Activated CD8-positive, alpha-beta T cell treated with anti-CD3 and anti-CD28 coated beads for 36 hours (primary cell): ENCODE measurements at regions of chr12 and their contacts with region 1.

Region 1: GRCh38 chr12:3885277-3886094 is 12.3 kb upstream of the PARP11 start:
- DNase-seq: peak; percentile 56
- ATAC-seq: no peak
- H3K4me3 Mint-ChIP-seq: no peak overlapping the region
- H3K27ac Mint-ChIP-seq: no peak overlapping the region
- H3K4me1 Mint-ChIP-seq: peaks cover 5% of the 10 kb centered on the region
- H3K27me3 Mint-ChIP-seq: no peaks in the 10 kb centered on the region
- CTCF ChIP-seq: peak; percentile 96

Region 2: GRCh38 chr12:3872800-3873636 is 12.5 kb before region 1 on chr12 and contains the start of gene PARP11:
- CTCF ChIA-PET with region 1: interaction called, 21 read pairs
- POLR2A ChIA-PET with region 1: interaction called, 4 read pairs
- intact Hi-C with region 1: no loop called
- DNase-seq: peak; percentile 99
- ATAC-seq: peak; percentile 96
- H3K4me3 Mint-ChIP-seq: peak within 1 kb of the TSS; percentile 93
- H3K27ac Mint-ChIP-seq: peak within 1 kb of the TSS; percentile 95
- H3K4me1 Mint-ChIP-seq: peaks cover 37% of the 10 kb centered on the region
- H3K27me3 Mint-ChIP-seq: no peaks in the 10 kb centered on the region
- CTCF ChIP-seq: no peak
- total RNA-seq, gene PARP11: 19.7 to 22.3 TPM

Region 3: GRCh38 chr12:3933074-3933818 is 47.8 kb after region 1 on chr12:
- CTCF ChIA-PET with region 1: interaction called, 11 read pairs
- POLR2A ChIA-PET with region 1: no interaction called
- intact Hi-C with region 1: no loop called
- DNase-seq: no peak
- ATAC-seq: peak; percentile 51
- H3K4me3 Mint-ChIP-seq: no peak overlapping the region
- H3K27ac Mint-ChIP-seq: peak overlapping the region; percentile 40
- H3K4me1 Mint-ChIP-seq: peaks cover 52% of the 10 kb centered on the region
- H3K27me3 Mint-ChIP-seq: peaks cover 3% of the 10 kb centered on the region
- CTCF ChIP-seq: no peak

Region 4: GRCh38 chr12:3973978-3974644 is 88.6 kb after region 1 on chr12:
- CTCF ChIA-PET with region 1: interaction called, 10 read pairs
- POLR2A ChIA-PET with region 1: interaction called, 3 read pairs
- intact Hi-C with region 1: loop called (anchors 10 kb)
- DNase-seq: peak; percentile 37
- ATAC-seq: peak; percentile 18
- H3K4me3 Mint-ChIP-seq: peak overlapping the region; percentile 52
- H3K27ac Mint-ChIP-seq: peak overlapping the region; percentile 92
- H3K4me1 Mint-ChIP-seq: peaks cover 64% of the 10 kb centered on the region
- H3K27me3 Mint-ChIP-seq: no peaks in the 10 kb centered on the region
- CTCF ChIP-seq: no peak

Region 5: GRCh38 chr12:4030929-4031702 is 145.6 kb after region 1 on chr12:
- CTCF ChIA-PET with region 1: interaction called, 70 read pairs
- POLR2A ChIA-PET with region 1: interaction called, 5 read pairs
- intact Hi-C with region 1: loop called (anchors 10 kb)
- DNase-seq: peak; percentile 77
- ATAC-seq: peak; percentile 91
- H3K4me3 Mint-ChIP-seq: peak overlapping the region; percentile 59
- H3K27ac Mint-ChIP-seq: peak overlapping the region; percentile 22
- H3K4me1 Mint-ChIP-seq: peaks cover 37% of the 10 kb centered on the region
- H3K27me3 Mint-ChIP-seq: no peaks in the 10 kb centered on the region
- CTCF ChIP-seq: no peak

Region 6: GRCh38 chr12:4148418-4149056 is 263.1 kb after region 1 on chr12:
- CTCF ChIA-PET with region 1: interaction called, 10 read pairs
- POLR2A ChIA-PET with region 1: no interaction called
- intact Hi-C with region 1: no loop called
- DNase-seq: peak; percentile 80
- ATAC-seq: peak; percentile 7
- H3K4me3 Mint-ChIP-seq: no peak overlapping the region
- H3K27ac Mint-ChIP-seq: peak overlapping the region; percentile 90
- H3K4me1 Mint-ChIP-seq: peaks cover 87% of the 10 kb centered on the region
- H3K27me3 Mint-ChIP-seq: no peaks in the 10 kb centered on the region
- CTCF ChIP-seq: no peak

Region 7: DNA sequence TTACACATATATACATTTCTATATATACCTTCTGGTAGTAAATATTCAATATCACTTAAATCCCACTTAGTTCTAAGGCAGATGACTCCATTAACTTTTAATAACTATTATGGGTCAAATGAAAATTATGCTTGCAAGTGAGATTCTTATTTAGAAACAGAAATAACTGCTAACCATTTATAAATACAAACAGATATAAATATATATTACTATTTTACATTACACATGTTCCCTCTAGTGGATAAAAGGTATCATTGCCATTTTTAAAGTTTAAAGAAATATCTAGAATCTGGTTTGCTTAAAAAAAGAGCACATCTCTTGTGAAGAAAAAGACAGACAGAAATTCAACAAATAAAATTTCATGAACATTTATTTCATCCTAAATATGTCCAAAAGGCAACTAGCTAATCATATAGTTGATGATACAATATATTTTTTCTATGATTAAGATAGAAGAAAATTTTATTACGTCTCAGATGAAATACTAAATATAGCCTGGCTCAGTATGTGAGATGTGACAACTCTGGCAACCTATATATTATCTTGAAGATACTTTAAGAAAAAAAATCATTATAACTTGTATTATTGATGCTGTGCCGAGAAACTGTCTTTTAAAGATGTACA is 641.5 kb after region 1 on chr12:
- CTCF ChIA-PET with region 1: interaction called, 3 read pairs
- POLR2A ChIA-PET with region 1: no interaction called
- intact Hi-C with region 1: loop called (anchors 10 kb)
- DNase-seq: no peak
- ATAC-seq: no peak
- H3K4me3 Mint-ChIP-seq: no peak overlapping the region
- H3K27ac Mint-ChIP-seq: no peak overlapping the region
- H3K4me1 Mint-ChIP-seq: peaks cover 3% of the 10 kb centered on the region
- H3K27me3 Mint-ChIP-seq: no peaks in the 10 kb centered on the region
- CTCF ChIP-seq: peak; percentile 83

Region 8: GRCh38 chr12:4567073-4567881 is 681.8 kb after region 1 on chr12:
- CTCF ChIA-PET with region 1: no interaction called
- POLR2A ChIA-PET with region 1: no interaction called
- intact Hi-C with region 1: no loop called
- DNase-seq: no peak
- ATAC-seq: no peak
- H3K4me3 Mint-ChIP-seq: no peak overlapping the region
- H3K27ac Mint-ChIP-seq: no peak overlapping the region
- H3K4me1 Mint-ChIP-seq: no peaks in the 10 kb centered on the region
- H3K27me3 Mint-ChIP-seq: peaks cover 14% of the 10 kb centered on the region
- CTCF ChIP-seq: no peak